ENCODE measurements at regions of chr13 and their contacts with region 1.

Region 1: DNA sequence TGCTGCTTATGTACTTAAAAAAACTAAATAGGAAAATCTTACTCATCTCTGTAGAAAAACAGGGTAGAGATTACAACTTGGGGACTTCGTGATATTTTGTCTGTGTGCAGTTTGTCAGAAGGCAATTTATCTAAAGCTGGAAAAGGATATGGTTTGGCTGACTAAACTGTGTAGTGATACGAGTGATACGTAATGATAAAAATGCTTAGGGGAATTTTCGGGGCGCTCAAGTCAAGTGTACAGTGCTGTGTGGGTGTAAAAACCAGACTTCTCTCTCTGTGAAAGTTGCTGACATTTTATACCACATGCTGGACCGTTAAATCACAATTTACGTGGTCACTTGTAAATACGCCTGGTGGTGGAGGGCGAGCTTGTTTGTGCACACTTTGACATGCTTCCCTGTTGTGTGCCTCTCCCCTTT is 221.7 kb downstream of the KCNRG start:
- DNase-seq: no peak
- ATAC-seq: peak; percentile 90
- H3K4me3 Mint-ChIP-seq: peak overlapping the region; percentile 55
- H3K27ac Mint-ChIP-seq: peak overlapping the region; percentile 92
- H3K4me1 Mint-ChIP-seq: peaks cover 53% of the 10 kb centered on the region
- H3K27me3 Mint-ChIP-seq: no peaks in the 10 kb centered on the region
- CTCF ChIP-seq: no peak

Region 2: GRCh38 chr13:50167224-50167947 is 69.5 kb before region 1 on chr13:
- CTCF ChIA-PET with region 1: no interaction called
- POLR2A ChIA-PET with region 1: interaction called, 9 read pairs
- intact Hi-C with region 1: loop called (anchors 2 kb)
- DNase-seq: no peak
- ATAC-seq: peak; percentile 87
- H3K4me3 Mint-ChIP-seq: no peak overlapping the region
- H3K27ac Mint-ChIP-seq: peak overlapping the region; percentile 66
- H3K4me1 Mint-ChIP-seq: peaks cover 12% of the 10 kb centered on the region
- H3K27me3 Mint-ChIP-seq: no peaks in the 10 kb centered on the region
- CTCF ChIP-seq: no peak

Region 3: DNA sequence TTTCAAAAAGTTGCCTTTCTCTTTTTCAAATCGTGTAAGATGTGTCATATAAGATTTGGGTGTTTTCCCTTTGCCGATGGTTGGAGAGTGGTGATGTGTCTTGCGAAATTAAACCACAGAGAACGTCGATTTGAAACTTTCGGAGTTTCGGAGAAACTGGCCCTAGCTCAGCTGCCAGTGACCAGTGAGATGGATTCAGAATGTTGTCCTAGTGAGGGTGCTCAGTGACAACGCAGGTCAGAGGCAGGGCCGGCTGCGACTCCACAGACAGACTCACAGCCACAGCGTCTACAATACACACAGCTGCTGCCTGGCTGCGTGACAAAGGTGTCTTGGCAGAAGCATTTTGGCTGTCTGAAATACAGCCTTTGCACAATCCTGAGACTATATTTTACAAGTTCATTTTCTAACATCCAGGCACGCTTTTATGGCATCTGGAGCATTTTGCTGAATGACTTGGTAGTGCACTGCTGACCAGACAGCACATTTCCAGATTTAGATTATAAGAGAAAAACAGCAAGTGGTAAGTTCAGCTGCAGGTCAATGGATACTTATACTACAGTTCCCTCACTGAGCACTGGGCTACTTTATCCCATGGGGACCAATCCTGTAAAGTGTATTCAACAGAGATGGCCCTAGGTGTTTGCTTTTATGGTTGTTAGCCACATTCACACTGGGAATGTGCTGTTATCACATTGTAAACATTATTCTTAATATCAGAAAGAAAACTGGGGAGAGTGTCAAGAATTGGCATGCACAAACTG is 14.2 kb before region 1 on chr13:
- CTCF ChIA-PET with region 1: interaction called, 3 read pairs
- POLR2A ChIA-PET with region 1: interaction called, 34 read pairs
- intact Hi-C with region 1: loop called (anchors 1 kb)
- DNase-seq: no peak
- ATAC-seq: peak; percentile 31
- H3K4me3 Mint-ChIP-seq: no peak overlapping the region
- H3K27ac Mint-ChIP-seq: peak overlapping the region; percentile 10
- H3K4me1 Mint-ChIP-seq: peaks cover 34% of the 10 kb centered on the region
- H3K27me3 Mint-ChIP-seq: no peaks in the 10 kb centered on the region
- CTCF ChIP-seq: no peak